Common myeloid progenitor, CD34-positive (primary cell): ENCODE measurements at regions of chr11 and their contacts with region 1.

Region 1: DNA sequence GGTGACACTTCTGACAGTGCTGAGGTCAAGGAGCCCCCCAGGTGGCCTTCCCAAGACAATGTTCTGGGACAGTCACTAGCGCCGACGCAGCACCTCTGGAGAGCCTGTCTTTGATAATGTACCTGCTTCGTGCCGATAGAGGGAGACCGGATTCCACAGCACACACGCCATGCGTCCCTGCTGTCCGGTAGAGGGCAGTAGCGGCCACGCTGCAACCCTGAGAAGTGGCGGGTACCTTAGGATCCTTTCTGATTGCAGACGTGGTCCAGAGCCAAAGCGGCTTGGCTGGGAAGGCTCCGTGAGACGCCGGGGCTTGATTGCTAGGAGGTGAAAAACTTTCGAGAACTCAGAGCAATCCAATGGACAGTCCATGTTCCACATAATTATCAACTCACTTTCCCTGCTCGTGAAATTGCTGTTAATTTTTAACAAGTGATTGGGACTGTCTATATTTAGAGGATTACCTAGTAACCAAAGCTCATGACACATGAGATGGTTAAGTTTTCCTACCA is 11.4 kb upstream of the BARX2 start:
- DNase-seq: peak; percentile 87 to 93 (median 91)
- H3K4me3 ChIP-seq: no peak overlapping the region
- H3K27ac ChIP-seq: no peak overlapping the region
- H3K4me1 ChIP-seq: no peaks in the 10 kb centered on the region
- H3K27me3 ChIP-seq: peaks cover 17 to 75% (median 49%) of the 10 kb centered on the region in 5 experiments

Region 2: GRCh38 chr11:129192156-129192555 is 172.0 kb before region 1 on chr11 and contains the start of gene ARHGAP32:
- CTCF ChIA-PET with region 1: no interaction called
- POLR2A ChIA-PET with region 1: no interaction called
- DNase-seq: peak in 2 of 3 donors; percentile 48 to 54
- H3K4me3 ChIP-seq: no peak within 1 kb of the TSS
- H3K27ac ChIP-seq: no peak within 1 kb of the TSS
- H3K4me1 ChIP-seq: no peaks in the 10 kb centered on the region
- H3K27me3 ChIP-seq: no peaks in the 10 kb centered on the region

Region 3: GRCh38 chr11:129323896-129324512 is 40.2 kb before region 1 on chr11:
- CTCF ChIA-PET with region 1: no interaction called
- POLR2A ChIA-PET with region 1: no interaction called
- DNase-seq: peak; percentile 20 to 82 (median 80)
- H3K4me3 ChIP-seq: peak overlapping the region in 1 of 7 experiments; percentile 5
- H3K27ac ChIP-seq: no peak overlapping the region
- H3K4me1 ChIP-seq: peaks cover 6 to 17% (median 11%) of the 10 kb centered on the region in 4 experiments
- H3K27me3 ChIP-seq: no peaks in the 10 kb centered on the region

Region 4: GRCh38 chr11:129375751-129376657 is 11.8 kb after region 1 on chr11 and contains the start of gene BARX2:
- CTCF ChIA-PET with region 1: interaction called, 14 read pairs
- POLR2A ChIA-PET with region 1: no interaction called
- DNase-seq: peak; percentile 57 to 72 (median 67)
- H3K4me3 ChIP-seq: peak within 1 kb of the TSS in 6 of 7 experiments; percentile 23 to 63 (median 34)
- H3K27ac ChIP-seq: no peak within 1 kb of the TSS
- H3K4me1 ChIP-seq: peaks cover 0 to 34% (median 31%) of the 10 kb centered on the region in 4 experiments
- H3K27me3 ChIP-seq: peaks cover 24 to 98% (median 55%) of the 10 kb centered on the region in 5 experiments

Region 5: GRCh38 chr11:129695575-129696308 is 331.5 kb after region 1 on chr11:
- CTCF ChIA-PET with region 1: interaction called, 14 read pairs
- POLR2A ChIA-PET with region 1: no interaction called
- DNase-seq: peak; percentile 69 to 86 (median 85)
- H3K4me3 ChIP-seq: peak overlapping the region; percentile 3 to 76 (median 68)
- H3K27ac ChIP-seq: no peak overlapping the region
- H3K4me1 ChIP-seq: peaks cover 0 to 10% (median 0%) of the 10 kb centered on the region in 4 experiments
- H3K27me3 ChIP-seq: peaks cover 0 to 11% (median 9%) of the 10 kb centered on the region in 5 experiments

Region 6: DNA sequence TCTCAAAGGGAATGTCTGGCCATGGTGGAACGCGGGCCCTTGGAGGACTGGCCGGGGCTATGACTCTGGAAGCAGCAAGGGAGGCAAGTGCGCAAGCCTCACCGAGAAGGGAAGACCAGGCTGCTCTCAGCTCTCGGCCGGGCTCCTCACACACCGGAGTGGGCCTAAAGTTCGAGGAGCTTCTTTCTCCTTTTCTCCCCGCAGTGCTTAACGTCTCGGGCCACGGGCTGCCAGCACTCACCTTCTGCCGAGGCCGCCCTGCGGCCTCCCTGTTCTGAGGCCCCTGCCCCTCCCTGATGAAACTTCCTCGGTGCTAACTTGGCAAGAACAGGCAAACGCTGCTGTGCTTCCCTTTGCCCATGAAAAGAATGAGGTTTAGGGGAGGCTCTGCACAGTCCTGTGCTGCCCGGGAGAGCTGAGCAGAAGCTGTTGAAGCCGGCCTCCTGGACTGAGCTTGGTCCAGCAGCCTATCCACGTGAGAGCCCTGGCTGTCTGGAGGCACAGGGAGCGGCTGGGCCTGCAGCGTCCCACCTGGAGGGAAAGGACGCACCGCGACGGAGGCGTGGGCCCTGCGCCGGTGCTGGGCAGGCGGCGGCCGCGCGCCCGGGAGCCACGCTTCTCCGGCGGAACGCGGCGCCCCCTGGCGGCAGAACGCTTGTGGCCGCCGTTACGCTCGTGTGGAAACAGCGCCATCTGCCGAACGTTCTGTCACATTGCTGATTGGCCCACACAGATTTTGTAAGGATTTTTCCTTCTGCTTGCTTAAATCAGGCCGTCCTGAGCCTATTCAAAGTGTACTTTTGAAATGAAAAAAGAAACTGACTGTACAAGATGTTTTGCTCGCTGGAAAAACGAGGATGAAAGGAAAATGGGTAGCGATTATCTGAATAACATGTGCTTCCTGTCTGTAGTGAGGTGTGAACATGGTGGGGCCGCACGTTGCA is 386.4 kb after region 1 on chr11:
- CTCF ChIA-PET with region 1: interaction called, 11 read pairs
- POLR2A ChIA-PET with region 1: interaction called, 3 read pairs
- DNase-seq: peak; percentile 73 to 88 (median 87)
- H3K4me3 ChIP-seq: peak overlapping the region in 5 of 7 experiments; percentile 26 to 67 (median 36)
- H3K27ac ChIP-seq: no peak overlapping the region
- H3K4me1 ChIP-seq: peaks cover 0 to 6% (median 4%) of the 10 kb centered on the region in 4 experiments
- H3K27me3 ChIP-seq: peaks cover 0 to 27% (median 11%) of the 10 kb centered on the region in 5 experiments